ENCODE measurements at regions of chr11 and their contacts with region 1.

Region 1: GRCh38 chr11:68632802-68633201 is 51.5 kb upstream of the GAL start:
- DNase-seq: peak; percentile 75
- H3K4me3 Mint-ChIP-seq: no peak overlapping the region
- H3K27ac Mint-ChIP-seq: no peak overlapping the region
- H3K4me1 Mint-ChIP-seq: no peaks in the 10 kb centered on the region
- H3K27me3 Mint-ChIP-seq: no peaks in the 10 kb centered on the region

Region 2: GRCh38 chr11:68798221-68798813 is 165.5 kb after region 1 on chr11:
- CTCF ChIA-PET with region 1: no interaction called
- intact Hi-C with region 1: loop called (anchors 2 kb)
- DNase-seq: peak; percentile 60
- H3K4me3 Mint-ChIP-seq: no peak overlapping the region
- H3K27ac Mint-ChIP-seq: no peak overlapping the region
- H3K4me1 Mint-ChIP-seq: no peaks in the 10 kb centered on the region
- H3K27me3 Mint-ChIP-seq: no peaks in the 10 kb centered on the region

Region 3: DNA sequence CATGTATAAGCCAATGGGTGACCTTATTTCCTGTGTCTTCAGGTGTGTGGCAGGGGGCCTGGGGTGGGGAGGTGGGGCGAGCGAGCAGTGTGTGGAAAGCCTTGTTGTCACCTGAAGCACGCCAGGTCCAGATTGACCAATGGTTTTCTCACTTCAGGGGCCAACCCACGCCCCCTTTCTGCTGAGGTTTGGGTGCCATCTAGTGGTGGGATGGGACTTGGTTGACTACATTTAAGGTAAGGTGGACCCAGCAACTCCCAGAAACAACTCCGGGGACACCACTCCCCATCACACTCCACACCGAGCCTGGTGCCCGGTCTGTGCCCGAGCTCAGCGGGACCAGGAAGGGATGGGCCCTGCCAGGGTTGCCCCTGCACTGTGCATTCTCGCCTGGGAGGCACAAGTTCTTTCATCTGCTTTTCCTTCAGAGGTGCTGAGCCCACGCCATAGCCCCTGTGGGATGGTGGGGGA is 455.9 kb after region 1 on chr11:
- CTCF ChIA-PET with region 1: no interaction called
- intact Hi-C with region 1: loop called (anchors 5 kb)
- DNase-seq: peak; percentile 77
- H3K4me3 Mint-ChIP-seq: no peak overlapping the region
- H3K27ac Mint-ChIP-seq: no peak overlapping the region
- H3K4me1 Mint-ChIP-seq: no peaks in the 10 kb centered on the region
- H3K27me3 Mint-ChIP-seq: no peaks in the 10 kb centered on the region